ENCODE measurements at regions of chr11 and their contacts with region 1.

Region 1: GRCh38 chr11:94897330-94897768 is 76.0 kb downstream of the CWC15 start:
- DNase-seq: peak; percentile 63
- H3K4me3 ChIP-seq: no peak overlapping the region; a peak in 1 of 4 replicates
- H3K27ac ChIP-seq: peak overlapping the region in 1 of 2 experiments; percentile 22; a peak in 1 of 4 replicates
- H3K4me1 ChIP-seq: peaks cover 0 to 5% of the 10 kb centered on the region in 2 experiments; a peak in 1 of 4 replicates
- H3K27me3 ChIP-seq: no peaks in the 10 kb centered on the region
- CTCF ChIP-seq: peak; percentile 95
- EP300 ChIP-seq: no peak
- RAD21 ChIP-seq: peak; percentile 83

Region 2: DNA sequence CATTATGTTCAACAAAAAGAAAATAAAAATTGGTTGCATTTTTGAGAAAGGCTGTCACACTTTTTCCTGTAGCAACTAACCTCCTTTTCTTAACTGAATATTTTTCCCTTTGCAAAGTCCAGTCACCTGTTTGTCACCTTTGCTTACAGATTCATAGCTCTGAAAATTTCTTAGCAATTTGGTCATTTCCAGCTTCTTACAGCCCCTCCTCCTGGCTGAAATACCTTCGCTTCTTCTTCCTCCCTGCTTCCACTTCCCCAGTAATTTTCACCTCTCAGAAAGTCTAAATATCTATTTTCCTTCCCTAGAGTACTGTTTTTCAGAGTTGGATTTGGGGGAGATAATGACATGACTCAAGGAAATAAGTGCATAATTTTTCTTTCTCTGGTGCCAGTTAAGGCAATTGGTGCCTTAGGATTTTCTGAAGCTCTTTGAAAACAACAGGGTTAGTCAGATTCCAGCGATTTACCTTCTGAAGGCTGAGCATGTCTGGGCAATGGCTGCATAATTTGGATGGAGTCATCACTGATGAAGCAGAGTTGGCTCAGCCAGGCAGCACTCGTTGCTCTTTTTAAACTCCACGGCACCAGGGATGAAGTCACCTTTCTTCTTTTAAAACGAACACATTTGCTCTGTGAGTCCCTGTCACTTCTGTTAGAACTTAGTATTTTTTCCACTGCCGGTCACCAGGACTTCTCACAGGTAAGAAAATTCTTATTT is 191.3 kb before region 1 on chr11:
- CTCF ChIA-PET with region 1: no interaction called
- POLR2A ChIA-PET with region 1: no interaction called
- DNase-seq: no peak
- H3K4me3 ChIP-seq: no peak overlapping the region; a peak in 1 of 4 replicates
- H3K27ac ChIP-seq: peak overlapping the region in 1 of 2 experiments; percentile 22; a peak in 3 of 4 replicates
- H3K4me1 ChIP-seq: no peaks in the 10 kb centered on the region; a peak in 1 of 4 replicates
- H3K27me3 ChIP-seq: no peaks in the 10 kb centered on the region
- CTCF ChIP-seq: no peak
- EP300 ChIP-seq: no peak
- RAD21 ChIP-seq: no peak

Region 3: DNA sequence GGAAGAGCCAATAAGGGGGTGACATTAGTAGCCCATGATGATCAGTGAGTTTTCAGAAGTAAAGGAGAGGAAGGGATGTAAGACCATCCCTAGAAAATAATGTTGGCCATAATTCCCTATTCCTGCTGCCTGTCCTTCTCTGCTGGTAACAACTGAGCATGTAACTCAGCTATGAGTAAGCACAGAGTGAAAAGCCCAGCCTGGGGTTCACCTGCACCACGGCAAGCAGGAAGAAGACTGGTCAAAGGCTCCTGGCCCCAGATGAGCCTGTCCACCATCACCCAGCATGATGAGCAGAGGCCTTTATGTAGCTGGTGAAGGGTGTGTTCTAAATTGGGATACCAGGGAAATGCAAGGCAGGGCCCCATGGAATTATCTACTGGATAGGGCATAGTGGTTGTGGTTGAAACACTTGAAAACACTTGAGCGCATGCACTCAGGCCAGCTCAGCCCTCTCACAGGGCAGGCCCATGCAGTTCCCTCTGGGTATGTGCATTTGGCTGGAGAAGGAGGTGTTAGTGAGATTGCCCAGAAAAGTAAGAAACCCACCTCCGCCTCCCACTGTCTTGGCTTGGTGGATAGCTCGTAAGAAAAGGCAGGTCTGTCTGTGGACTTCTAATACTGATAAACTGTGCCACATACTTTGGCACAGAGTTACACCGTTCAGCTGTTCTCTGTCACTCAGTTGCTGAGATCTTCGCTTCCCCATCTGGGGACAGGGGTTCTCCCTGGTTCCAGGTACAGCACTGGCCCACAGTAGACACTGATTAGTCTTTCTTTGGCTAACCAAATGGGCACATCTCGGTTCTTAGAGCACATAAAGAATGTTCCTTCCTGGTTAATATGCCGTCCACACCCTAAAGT is 42.3 kb before region 1 on chr11:
- CTCF ChIA-PET with region 1: no interaction called
- POLR2A ChIA-PET with region 1: no interaction called
- DNase-seq: no peak
- H3K4me3 ChIP-seq: no peak overlapping the region
- H3K27ac ChIP-seq: no peak overlapping the region
- H3K4me1 ChIP-seq: peaks cover 3 to 4% of the 10 kb centered on the region in 2 experiments; a peak in 1 of 4 replicates
- H3K27me3 ChIP-seq: no peaks in the 10 kb centered on the region
- CTCF ChIP-seq: no peak
- EP300 ChIP-seq: no peak
- RAD21 ChIP-seq: no peak

Region 4: DNA sequence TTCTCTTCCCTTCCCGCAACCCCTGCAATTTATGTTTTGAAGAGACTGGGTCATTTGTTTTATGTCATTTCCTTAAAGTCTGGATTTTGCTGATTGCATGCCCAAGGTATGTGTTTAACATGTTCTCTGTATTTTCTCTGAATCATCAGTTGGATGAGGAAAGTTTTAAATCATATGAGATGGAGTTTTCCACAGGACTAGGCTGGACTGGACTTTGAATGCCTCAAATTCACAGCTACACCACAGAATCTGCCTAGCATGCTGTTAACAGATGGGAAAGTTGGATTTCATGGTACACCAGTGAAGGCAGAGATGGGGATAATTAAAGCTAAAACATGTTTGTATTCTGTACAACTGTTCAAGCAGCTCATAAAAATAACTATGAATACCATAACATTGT is 13.4 kb after region 1 on chr11:
- CTCF ChIA-PET with region 1: interaction called, 17 read pairs
- POLR2A ChIA-PET with region 1: no interaction called
- DNase-seq: no peak
- H3K4me3 ChIP-seq: no peak overlapping the region
- H3K27ac ChIP-seq: peak overlapping the region; percentile 18 to 53; a peak in 3 of 4 replicates
- H3K4me1 ChIP-seq: no peaks in the 10 kb centered on the region; a peak in 1 of 4 replicates
- H3K27me3 ChIP-seq: no peaks in the 10 kb centered on the region
- CTCF ChIP-seq: no peak
- EP300 ChIP-seq: no peak
- RAD21 ChIP-seq: no peak